Activated CD8-positive, alpha-beta T cell treated with anti-CD3 and anti-CD28 coated beads, Interleukin-2, amount 10 ng/mL, durations not matched to agents 7 days and 5 days (primary cell): ENCODE measurements at regions of chr14 and their contacts with region 1.

Region 1: DNA sequence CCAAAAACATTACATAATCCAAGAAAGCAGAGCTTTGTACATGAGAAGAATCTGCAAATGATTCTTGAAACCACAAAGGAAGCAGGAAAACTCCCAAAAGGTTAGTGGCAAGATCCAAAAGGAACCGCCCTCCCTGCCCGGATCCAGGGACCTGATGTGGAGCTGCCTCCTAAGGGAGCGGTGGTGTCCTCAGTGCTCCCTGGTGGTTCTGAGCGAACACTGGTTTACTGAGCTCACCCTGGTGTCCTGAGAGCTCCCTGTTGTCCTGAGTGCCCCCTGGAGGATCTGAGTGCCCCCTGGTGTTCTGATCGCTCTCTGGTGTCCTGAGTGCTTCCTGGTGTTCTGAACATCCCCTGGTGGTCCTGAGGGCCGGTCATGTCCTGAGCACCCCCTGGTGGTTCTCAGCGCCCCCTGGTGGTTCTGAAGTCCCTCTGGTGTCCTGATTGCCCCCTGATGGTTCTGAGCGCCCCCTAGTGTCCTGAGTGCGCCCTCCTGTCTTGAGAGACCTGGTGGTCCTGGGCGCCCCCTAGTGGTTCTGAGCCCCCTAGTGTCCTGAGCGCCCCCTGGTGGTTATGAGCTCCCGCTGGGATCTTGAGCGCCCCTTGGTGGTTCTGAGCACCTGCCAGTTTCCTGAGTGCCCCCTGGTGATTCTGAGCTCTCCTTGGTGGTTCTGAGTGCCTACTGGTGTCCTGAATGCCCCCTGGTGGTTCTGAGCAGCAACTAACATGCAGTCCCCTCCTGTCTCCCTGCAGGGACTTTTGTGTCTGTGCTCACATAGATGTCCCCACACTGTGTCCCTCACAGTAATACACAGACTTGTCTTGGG is 891.1 kb downstream of the TMEM121 start:
- DNase-seq: peak; percentile 92
- ATAC-seq: peak; percentile 92
- H3K4me3 Mint-ChIP-seq: no peak overlapping the region
- H3K27ac Mint-ChIP-seq: no peak overlapping the region
- H3K4me1 Mint-ChIP-seq: no peaks in the 10 kb centered on the region
- H3K27me3 Mint-ChIP-seq: peaks cover 16% of the 10 kb centered on the region

Region 2: DNA sequence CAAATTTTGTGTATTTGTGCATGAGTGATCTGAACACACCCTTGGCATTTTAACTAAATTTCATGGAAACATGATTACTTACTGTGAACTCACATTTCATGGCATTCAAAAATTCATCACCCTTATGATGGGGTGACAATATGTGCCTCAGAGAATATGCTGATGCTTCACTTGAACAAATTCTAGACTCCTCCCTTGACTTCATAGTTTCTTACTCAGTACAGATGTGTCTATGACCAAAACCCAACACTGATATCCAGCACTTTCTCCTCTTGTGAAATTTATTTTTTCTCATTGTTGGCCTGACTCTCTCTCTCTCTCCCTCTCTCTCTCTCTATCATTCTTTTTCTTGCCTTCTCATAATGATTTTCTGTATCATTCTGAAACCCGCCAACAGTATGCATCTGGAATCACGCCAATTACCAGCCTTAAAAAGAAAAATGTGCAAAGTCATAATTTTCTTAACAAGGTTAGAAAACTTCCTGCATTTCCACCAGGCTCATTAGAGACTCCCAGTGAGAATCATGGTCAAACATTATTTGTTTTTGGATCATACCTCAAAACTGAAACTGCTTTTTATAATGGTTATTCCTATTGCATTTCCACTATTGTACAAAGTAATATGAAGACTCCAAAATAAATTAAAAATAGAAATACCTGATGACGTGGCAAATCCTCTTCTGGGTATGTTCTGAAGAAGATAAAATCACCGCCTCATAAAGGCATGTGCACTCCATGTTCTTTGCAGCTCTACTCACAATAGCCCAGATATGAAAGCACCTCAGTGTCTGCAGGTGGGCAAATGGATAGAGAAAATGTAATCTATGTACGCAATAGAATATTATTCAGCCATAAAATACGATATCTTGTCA is 168.9 kb before region 1 on chr14:
- CTCF ChIA-PET with region 1: no interaction called
- POLR2A ChIA-PET with region 1: no interaction called
- DNase-seq: no peak
- ATAC-seq: no peak
- H3K4me3 Mint-ChIP-seq: no peak overlapping the region
- H3K27ac Mint-ChIP-seq: no peak overlapping the region
- H3K4me1 Mint-ChIP-seq: peaks cover 6% of the 10 kb centered on the region
- H3K27me3 Mint-ChIP-seq: peaks cover 24% of the 10 kb centered on the region

Region 3: DNA sequence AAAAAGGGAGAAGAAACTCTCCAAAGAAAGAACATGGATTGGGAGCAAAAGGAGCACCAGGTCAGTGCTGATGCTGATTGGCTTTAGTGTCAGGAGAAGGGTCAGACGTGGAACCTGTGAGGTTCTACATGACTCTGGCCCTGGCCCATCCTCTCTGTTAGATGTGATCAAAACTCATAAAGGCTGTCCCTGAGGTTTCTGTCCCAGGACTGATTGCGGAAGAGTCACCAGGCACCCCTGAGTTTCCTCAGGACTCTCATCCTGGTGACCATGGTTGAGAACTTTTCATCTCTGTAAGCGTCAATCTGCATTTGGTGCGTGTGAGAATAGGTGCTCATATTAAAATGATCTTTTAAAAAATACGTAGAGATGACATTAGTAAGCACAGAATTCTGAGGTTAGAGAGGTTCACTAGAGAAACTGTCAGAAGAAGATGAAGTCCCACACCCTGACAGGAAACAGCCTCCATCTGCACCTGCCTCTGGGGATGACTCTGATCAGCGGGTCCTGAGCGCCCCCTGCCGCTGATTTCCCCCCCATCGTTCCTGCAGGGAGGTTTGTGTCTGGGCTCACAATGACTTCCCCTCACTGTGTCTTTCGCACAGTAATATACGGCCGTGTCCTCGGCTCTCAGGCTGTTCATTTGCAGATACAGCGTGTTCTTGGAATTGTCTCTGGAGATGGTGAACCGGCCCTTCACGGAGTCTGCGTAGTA is 149.3 kb before region 1 on chr14:
- CTCF ChIA-PET with region 1: no interaction called
- POLR2A ChIA-PET with region 1: no interaction called
- DNase-seq: peak; percentile 80
- ATAC-seq: peak; percentile 57
- H3K4me3 Mint-ChIP-seq: no peak overlapping the region
- H3K27ac Mint-ChIP-seq: no peak overlapping the region
- H3K4me1 Mint-ChIP-seq: peaks cover 9% of the 10 kb centered on the region
- H3K27me3 Mint-ChIP-seq: peaks cover 14% of the 10 kb centered on the region

Region 4: DNA sequence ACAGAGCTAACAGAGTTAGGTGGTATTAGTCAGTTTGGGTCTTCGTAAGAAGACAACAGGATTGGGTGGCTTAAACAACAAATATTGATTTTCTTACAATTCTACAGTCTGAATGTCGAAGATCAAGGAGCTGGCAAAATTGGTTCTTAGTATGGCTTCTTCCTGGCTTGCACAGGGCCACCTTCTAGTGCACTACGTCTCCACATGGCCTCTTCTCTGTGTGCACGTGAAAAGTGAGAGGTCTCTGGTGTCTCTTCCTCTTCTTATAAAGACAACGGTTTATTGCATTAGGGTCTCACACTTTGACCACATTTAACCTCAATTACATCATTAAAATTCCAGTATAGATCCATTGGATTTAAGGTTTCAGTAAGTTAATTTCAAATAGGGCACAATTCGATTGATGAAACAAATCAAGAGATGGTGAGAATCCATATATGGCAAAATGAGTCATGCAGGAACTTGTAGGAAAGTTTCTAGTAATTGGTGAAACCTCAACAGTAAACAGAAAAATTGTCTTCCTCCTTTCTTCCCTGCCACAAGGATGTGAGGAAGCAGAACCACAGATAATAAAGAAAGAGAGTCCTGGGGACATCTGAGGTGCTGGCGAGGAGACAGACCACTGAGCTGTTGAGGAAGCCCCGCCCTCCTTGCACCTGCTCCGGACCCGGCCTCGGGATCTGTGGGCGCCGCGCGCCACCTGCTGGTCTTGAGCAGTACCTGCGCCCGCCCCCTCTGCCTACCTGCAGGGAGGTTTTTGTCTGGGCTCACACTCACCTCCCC is 44.4 kb before region 1 on chr14:
- CTCF ChIA-PET with region 1: interaction called, 68 read pairs
- POLR2A ChIA-PET with region 1: no interaction called
- DNase-seq: peak; percentile 88
- ATAC-seq: peak; percentile 97
- H3K4me3 Mint-ChIP-seq: no peak overlapping the region
- H3K27ac Mint-ChIP-seq: peak overlapping the region; percentile 26
- H3K4me1 Mint-ChIP-seq: peaks cover 30% of the 10 kb centered on the region
- H3K27me3 Mint-ChIP-seq: peaks cover 19% of the 10 kb centered on the region

Region 5: GRCh38 chr14:106442857-106443256 is 25.4 kb after region 1 on chr14:
- CTCF ChIA-PET with region 1: no interaction called
- POLR2A ChIA-PET with region 1: no interaction called
- DNase-seq: no peak
- ATAC-seq: no peak
- H3K4me3 Mint-ChIP-seq: no peak overlapping the region
- H3K27ac Mint-ChIP-seq: no peak overlapping the region
- H3K4me1 Mint-ChIP-seq: no peaks in the 10 kb centered on the region
- H3K27me3 Mint-ChIP-seq: no peaks in the 10 kb centered on the region

Region 6: DNA sequence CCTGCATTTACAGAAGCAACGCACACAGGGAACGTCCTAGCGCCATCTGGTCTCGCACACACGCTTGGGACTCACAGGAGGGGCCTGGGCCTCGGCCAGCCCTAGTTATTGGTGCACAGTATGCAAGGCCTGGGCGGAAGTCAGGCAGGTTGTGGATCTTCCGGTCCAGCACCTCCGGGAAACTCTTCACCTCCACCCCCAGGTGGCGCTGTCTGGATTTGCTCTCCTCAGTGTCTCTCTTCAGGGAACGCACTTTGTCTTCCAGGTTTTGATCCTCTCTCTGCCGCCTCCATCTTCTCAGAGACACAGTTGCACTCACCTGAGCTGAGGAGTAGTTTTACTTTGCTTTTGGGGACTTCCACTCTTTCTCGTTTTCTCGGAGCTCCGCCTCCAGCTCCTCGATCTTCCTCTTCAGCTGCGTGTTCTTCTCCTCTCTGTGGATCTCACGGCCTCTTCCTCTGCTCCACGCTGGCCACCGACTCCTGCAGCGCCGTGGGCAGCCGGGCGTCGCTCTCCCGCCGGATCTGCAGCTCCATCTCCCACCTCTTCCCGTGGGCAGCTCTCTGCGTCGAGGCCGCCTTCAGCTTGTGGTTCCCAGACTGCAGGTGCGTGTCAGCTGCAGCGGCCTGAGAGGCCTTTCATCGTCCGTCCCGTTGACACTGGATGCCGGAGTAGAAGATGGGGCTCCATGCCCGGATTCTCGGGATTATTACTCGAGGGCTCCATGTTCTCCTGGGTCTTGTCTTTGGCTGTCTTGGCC is 42.7 kb after region 1 on chr14:
- CTCF ChIA-PET with region 1: interaction called, 154 read pairs
- POLR2A ChIA-PET with region 1: no interaction called
- DNase-seq: no peak
- ATAC-seq: no peak
- H3K4me3 Mint-ChIP-seq: no peak overlapping the region
- H3K27ac Mint-ChIP-seq: no peak overlapping the region
- H3K4me1 Mint-ChIP-seq: no peaks in the 10 kb centered on the region
- H3K27me3 Mint-ChIP-seq: no peaks in the 10 kb centered on the region

Region 7: DNA sequence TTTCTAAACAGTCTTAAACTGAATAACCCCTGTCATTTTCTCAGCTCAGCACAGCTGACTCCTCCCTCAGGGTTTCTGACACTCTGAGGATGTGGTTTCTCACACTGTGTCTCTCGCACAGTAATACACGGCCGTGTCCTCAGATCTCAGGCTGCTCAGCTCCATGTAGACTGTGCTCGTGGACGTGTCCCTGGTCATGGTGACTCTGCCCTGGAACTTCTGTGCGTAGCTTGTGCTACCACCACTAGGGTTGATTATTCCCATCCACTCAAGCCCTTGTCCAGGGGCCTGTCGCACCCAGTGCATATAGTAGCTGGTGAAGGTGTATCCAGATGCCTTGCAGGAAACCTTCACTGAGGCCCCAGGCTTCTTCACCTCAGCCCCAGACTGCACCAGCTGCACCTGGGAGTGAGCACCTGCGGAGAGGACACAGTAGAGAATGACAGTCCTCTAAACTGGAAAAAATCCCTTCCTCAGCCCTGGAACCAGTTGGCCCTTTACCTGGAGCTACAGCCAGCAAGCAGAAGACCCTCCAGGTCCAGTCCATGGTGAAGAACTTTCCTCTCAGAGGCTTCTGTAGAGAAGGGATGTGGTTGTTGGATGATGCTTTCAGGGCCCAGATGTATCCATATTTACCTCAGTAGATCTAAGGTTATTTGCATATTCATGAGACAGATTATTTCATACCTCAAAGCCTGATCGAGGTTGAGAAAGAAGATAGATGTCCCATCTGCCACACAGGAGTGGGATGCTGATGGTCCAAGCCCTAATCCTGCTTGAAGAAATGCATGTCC is 93.8 kb after region 1 on chr14:
- CTCF ChIA-PET with region 1: interaction called, 115 read pairs
- POLR2A ChIA-PET with region 1: no interaction called
- DNase-seq: peak; percentile 82
- ATAC-seq: peak; percentile 79
- H3K4me3 Mint-ChIP-seq: peak overlapping the region; percentile 56
- H3K27ac Mint-ChIP-seq: peak overlapping the region; percentile 93
- H3K4me1 Mint-ChIP-seq: peaks cover 71% of the 10 kb centered on the region
- H3K27me3 Mint-ChIP-seq: peaks cover 17% of the 10 kb centered on the region

Region 8: GRCh38 chr14:106538201-106538600 is 120.8 kb after region 1 on chr14:
- CTCF ChIA-PET with region 1: interaction called, 240 read pairs
- POLR2A ChIA-PET with region 1: no interaction called
- DNase-seq: no peak
- ATAC-seq: no peak
- H3K4me3 Mint-ChIP-seq: no peak overlapping the region
- H3K27ac Mint-ChIP-seq: no peak overlapping the region
- H3K4me1 Mint-ChIP-seq: peaks cover 14% of the 10 kb centered on the region
- H3K27me3 Mint-ChIP-seq: peaks cover 39% of the 10 kb centered on the region

Region 9: GRCh38 chr14:106622200-106622745 is 204.8 kb after region 1 on chr14:
- CTCF ChIA-PET with region 1: interaction called, 15 read pairs
- POLR2A ChIA-PET with region 1: no interaction called
- DNase-seq: peak; percentile 65
- ATAC-seq: peak; percentile 64
- H3K4me3 Mint-ChIP-seq: no peak overlapping the region
- H3K27ac Mint-ChIP-seq: no peak overlapping the region
- H3K4me1 Mint-ChIP-seq: peaks cover 33% of the 10 kb centered on the region
- H3K27me3 Mint-ChIP-seq: peaks cover 44% of the 10 kb centered on the region